CD14-positive monocyte (primary cell): ENCODE measurements at regions of chr1 and their contacts with region 1.

Region 1: GRCh38 chr1:86833461-86834215 is 80.3 kb downstream of the SELENOF start:
- DNase-seq: peak; percentile 47 to 63 (median 62)
- H3K4me3 ChIP-seq: no peak overlapping the region
- H3K4me3 Mint-ChIP-seq: no peak overlapping the region
- H3K27ac ChIP-seq: no peak overlapping the region
- H3K27ac Mint-ChIP-seq: peak overlapping the region in 5 of 7 donors; percentile 24 to 60 (median 30)
- H3K4me1 ChIP-seq: no peaks in the 10 kb centered on the region
- H3K4me1 Mint-ChIP-seq: peaks cover 6% of the 10 kb centered on the region
- H3K27me3 ChIP-seq: no peaks in the 10 kb centered on the region
- H3K27me3 Mint-ChIP-seq: peaks cover 2 to 3% (median 3%) of the 10 kb centered on the region in 3 donors
- CTCF ChIP-seq: peak; percentile 66

Region 2: DNA sequence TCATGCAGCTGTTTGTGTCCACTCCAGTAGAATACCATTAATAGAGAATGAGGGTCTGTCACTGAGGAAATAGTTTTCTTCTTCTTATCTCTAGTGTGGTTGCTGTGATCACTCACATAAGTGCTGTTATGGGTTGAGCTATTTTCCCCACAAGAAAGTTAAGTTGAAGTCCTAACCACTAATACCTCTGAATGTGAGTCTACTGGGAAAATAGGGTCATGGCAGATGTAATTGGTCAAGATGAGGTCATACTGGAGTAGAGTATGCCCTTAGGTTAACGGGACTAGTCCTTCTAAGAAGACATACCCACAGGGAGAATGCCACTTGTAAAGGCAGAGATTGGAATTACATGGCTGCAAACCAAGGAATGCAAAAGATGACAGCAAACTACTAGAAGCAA is 606.6 kb before region 1 on chr1:
- intact Hi-C with region 1: no loop called
- DNase-seq: no peak
- H3K4me3 ChIP-seq: no peak overlapping the region
- H3K4me3 Mint-ChIP-seq: no peak overlapping the region
- H3K27ac ChIP-seq: no peak overlapping the region
- H3K27ac Mint-ChIP-seq: peak overlapping the region in 1 of 7 donors; percentile 48
- H3K4me1 ChIP-seq: no peaks in the 10 kb centered on the region
- H3K4me1 Mint-ChIP-seq: no peaks in the 10 kb centered on the region
- H3K27me3 ChIP-seq: no peaks in the 10 kb centered on the region
- H3K27me3 Mint-ChIP-seq: no peaks in the 10 kb centered on the region
- CTCF ChIP-seq: no peak

Region 3: GRCh38 chr1:86798608-86799291 is 34.9 kb before region 1 on chr1:
- intact Hi-C with region 1: no loop called
- DNase-seq: no peak
- H3K4me3 ChIP-seq: no peak overlapping the region
- H3K4me3 Mint-ChIP-seq: no peak overlapping the region
- H3K27ac ChIP-seq: no peak overlapping the region
- H3K27ac Mint-ChIP-seq: peak overlapping the region in 2 of 7 donors; percentile 57 to 67
- H3K4me1 ChIP-seq: no peaks in the 10 kb centered on the region
- H3K4me1 Mint-ChIP-seq: peaks cover 14% of the 10 kb centered on the region
- H3K27me3 ChIP-seq: no peaks in the 10 kb centered on the region
- H3K27me3 Mint-ChIP-seq: peaks cover 0 to 3% (median 2%) of the 10 kb centered on the region in 3 donors
- CTCF ChIP-seq: no peak

Region 4: DNA sequence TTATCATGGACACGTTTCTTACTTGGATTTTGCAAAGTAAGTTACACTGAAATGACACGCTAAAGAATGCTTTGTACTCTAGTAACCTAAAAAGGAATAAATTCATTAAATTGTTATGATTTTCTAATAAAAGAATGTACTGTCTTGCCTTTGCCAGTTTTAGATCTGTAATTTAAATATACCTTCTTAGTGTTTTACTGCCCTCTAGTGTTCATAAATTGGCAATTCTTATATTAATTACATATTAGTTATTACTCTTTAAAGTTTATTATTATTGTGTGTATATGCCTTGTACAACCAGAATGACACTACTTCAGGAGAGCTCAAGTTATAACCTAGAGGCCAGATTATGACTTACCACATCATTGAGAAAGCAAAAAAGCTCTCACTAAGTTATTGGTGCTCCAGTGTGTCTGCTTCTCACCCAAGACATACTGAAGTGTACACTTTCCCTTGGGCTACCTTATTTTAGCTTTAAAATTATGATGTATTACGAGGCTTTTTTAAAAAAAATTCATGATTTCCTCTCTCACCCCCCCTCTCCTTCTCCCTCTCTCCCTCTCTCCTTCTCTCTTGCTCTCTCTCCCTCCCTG is 250.7 kb after region 1 on chr1:
- intact Hi-C with region 1: loop called in 1 of 2 experiments (anchors 10 kb)
- DNase-seq: peak; percentile 10 to 51 (median 13)
- H3K4me3 ChIP-seq: no peak overlapping the region
- H3K4me3 Mint-ChIP-seq: no peak overlapping the region
- H3K27ac ChIP-seq: no peak overlapping the region
- H3K27ac Mint-ChIP-seq: peak overlapping the region in 3 of 7 donors; percentile 26 to 81 (median 66)
- H3K4me1 ChIP-seq: no peaks in the 10 kb centered on the region
- H3K4me1 Mint-ChIP-seq: no peaks in the 10 kb centered on the region
- H3K27me3 ChIP-seq: no peaks in the 10 kb centered on the region
- H3K27me3 Mint-ChIP-seq: peaks cover 0 to 2% (median 0%) of the 10 kb centered on the region in 3 donors
- CTCF ChIP-seq: peak; percentile 79